ENCODE measurements at regions of chr17 and their contacts with region 1.

Region 1: GRCh38 chr17:50200457-50201275 is 765 bp downstream of the COL1A1 start:
- DNase-seq: peak; percentile 88
- ATAC-seq: peak; percentile 72
- H3K4me3 ChIP-seq: peak overlapping the region; percentile 71 to 75
- H3K27ac ChIP-seq: peak overlapping the region; percentile 45; the same call in 1 of the 2 replicates
- H3K4me1 ChIP-seq: peaks cover 10 to 39% of the 10 kb centered on the region in 2 experiments
- H3K27me3 ChIP-seq: no peaks in the 10 kb centered on the region
- CTCF ChIP-seq: peak; percentile 99 to 100 (median 100)
- POLR2A ChIP-seq: no peak
- RAD21 ChIP-seq: peak; percentile 100

Region 2: GRCh38 chr17:49567871-49568694 is 632.6 kb before region 1 on chr17:
- CTCF ChIA-PET with region 1: no interaction called
- POLR2A ChIA-PET with region 1: no interaction called
- RAD21 ChIA-PET with region 1: no interaction called
- intact Hi-C with region 1: loop called (anchors 5 kb)
- DNase-seq: peak; percentile 81
- ATAC-seq: peak; percentile 74
- H3K4me3 ChIP-seq: 0 out of 4 replicates have a peak overlapping the region, but pooled peaks of 1 of the 2 experiments have one; percentile 2
- H3K27ac ChIP-seq: no peak overlapping the region
- H3K4me1 ChIP-seq: peaks cover 0 to 17% of the 10 kb centered on the region in 2 experiments; a peak in 3 of 4 replicates
- H3K27me3 ChIP-seq: peaks cover 5% of the 10 kb centered on the region; the same call in 1 of the 2 replicates
- CTCF ChIP-seq: peak; percentile 98 to 99 (median 99)
- POLR2A ChIP-seq: no peak
- RAD21 ChIP-seq: peak; percentile 100

Region 3: DNA sequence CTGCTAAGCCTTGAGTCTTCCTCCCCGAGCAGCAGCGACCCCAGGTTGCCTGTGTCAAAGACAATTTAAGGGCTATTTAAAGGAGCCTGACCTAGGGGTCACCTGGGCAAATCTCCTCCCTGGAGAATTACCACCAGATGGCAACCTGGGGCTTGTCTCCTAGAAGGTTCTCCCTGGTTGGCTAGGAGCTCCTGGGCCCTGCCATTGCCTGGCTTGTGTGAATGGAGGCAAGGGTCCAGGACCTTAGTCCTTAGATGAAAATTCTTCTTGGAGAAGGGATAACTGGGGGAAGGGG is 301.5 kb before region 1 on chr17:
- CTCF ChIA-PET with region 1: no interaction called
- POLR2A ChIA-PET with region 1: no interaction called
- RAD21 ChIA-PET with region 1: no interaction called
- intact Hi-C with region 1: no loop called
- DNase-seq: peak; percentile 48
- ATAC-seq: peak; percentile 73
- H3K4me3 ChIP-seq: no peak overlapping the region
- H3K27ac ChIP-seq: no peak overlapping the region
- H3K4me1 ChIP-seq: peaks cover 28 to 40% of the 10 kb centered on the region in 2 experiments
- H3K27me3 ChIP-seq: peaks cover 7% of the 10 kb centered on the region; the same call in 1 of the 2 replicates
- CTCF ChIP-seq: peak; percentile 58 to 71 (median 62)
- POLR2A ChIP-seq: no peak
- RAD21 ChIP-seq: peak; percentile 85

Region 4: DNA sequence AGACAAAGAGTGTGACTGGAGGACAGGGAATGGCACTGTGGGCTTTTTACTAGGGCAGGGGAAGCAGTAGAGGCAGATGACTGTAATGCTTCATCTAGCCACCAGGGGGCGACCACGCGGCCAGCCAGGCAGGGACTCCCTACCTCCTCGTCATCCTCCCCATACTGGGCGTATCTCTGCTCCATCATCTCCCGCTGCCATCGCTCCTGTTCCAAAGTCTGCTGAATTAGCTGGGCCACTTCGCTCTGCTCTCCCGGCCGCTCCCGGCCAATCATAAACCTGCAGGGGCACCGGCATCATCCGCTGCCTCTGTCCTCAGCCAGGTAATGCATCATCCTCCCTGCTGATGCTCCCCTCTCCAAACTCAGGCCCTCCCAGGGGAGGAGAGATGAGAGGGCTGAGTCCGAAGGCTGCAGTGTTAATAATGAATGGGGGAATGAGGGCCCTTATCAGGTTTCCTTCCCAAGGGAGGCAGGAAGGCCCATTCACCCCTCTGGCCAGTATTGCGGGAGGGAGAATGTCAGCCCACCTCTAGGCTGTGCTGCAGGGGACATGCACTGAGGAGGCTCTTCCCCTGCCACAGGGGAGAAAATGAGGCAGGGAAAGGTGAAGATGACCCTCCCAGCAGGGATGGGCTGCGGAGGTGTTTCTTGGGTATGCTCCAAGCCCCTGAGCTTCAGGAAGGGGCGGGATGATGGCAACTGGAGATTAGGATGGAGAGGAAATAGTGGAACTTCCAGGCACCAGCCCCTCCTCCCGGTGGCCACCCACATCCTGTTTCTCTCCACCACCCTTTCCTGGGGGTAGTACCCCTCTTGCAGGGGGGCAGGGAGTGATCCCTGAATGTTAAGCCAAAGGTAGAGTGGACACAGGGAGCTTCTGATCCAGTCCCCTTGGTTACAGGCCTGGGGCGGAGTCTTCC is 60.5 kb before region 1 on chr17:
- CTCF ChIA-PET with region 1: no interaction called
- POLR2A ChIA-PET with region 1: no interaction called
- RAD21 ChIA-PET with region 1: no interaction called
- intact Hi-C with region 1: loop called (anchors 1 kb)
- DNase-seq: peak; percentile 63
- ATAC-seq: peak; percentile 93
- H3K4me3 ChIP-seq: no peak overlapping the region
- H3K27ac ChIP-seq: peak overlapping the region; percentile 13; the same call in 1 of the 2 replicates
- H3K4me1 ChIP-seq: peaks cover 0 to 9% of the 10 kb centered on the region in 2 experiments; a peak in 1 of 4 replicates
- H3K27me3 ChIP-seq: no peaks in the 10 kb centered on the region
- CTCF ChIP-seq: peak; percentile 72 to 97 (median 89)
- POLR2A ChIP-seq: no peak
- RAD21 ChIP-seq: no peak; the same call in none of the 2 replicates

Region 5: DNA sequence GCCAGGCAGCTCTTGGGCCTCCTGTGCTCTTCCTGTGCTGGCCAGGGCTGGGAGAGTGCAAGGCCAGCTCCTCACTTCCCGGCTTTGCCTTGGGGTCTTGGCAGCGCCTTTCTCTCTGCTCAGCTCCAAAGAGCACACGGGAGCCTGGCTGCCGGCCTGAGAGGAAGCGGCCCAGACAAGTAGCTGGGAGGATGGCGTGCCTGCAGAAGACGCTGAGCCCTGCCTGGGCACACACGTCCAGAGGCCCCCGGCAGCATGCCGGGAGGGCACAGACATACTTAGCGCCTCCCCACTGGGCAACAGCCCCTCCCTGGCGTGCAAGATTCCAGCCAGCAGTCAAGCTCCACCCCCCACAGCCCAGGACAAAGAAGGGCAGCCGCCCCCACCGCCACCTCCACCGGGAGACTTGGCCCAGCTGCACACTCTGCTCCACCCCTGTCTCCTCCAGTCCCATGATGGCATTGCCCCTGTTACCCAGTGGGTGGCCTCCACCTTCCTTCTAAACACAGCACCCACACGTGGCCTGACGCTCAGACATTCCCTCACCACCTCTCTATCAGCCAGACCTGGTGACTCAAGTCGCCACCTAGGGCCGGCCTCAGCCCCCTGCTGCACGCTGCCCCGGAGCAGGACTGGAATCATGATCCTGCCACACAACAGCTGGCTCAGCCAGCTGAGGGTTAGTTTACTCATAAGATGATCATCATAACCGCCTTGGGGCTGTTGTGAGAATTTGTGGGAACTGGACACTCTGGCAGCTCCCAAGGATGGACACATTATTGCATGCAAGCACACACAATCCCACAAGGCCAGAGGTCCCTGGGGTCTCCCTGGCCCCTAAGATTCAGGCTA is 22.5 kb before region 1 on chr17:
- CTCF ChIA-PET with region 1: interaction called, 39 read pairs
- POLR2A ChIA-PET with region 1: interaction called, 18 read pairs
- RAD21 ChIA-PET with region 1: interaction called in 1 of 2 experiments, 12 read pairs
- intact Hi-C with region 1: no loop called
- DNase-seq: peak; percentile 90
- ATAC-seq: peak; percentile 94
- H3K4me3 ChIP-seq: peak overlapping the region; percentile 22 to 43
- H3K27ac ChIP-seq: peak overlapping the region; percentile 61
- H3K4me1 ChIP-seq: peaks cover 41 to 56% of the 10 kb centered on the region in 2 experiments
- H3K27me3 ChIP-seq: no peaks in the 10 kb centered on the region
- CTCF ChIP-seq: peak; percentile 80 to 96 (median 82)
- POLR2A ChIP-seq: no peak
- RAD21 ChIP-seq: peak; percentile 72

Region 6: DNA sequence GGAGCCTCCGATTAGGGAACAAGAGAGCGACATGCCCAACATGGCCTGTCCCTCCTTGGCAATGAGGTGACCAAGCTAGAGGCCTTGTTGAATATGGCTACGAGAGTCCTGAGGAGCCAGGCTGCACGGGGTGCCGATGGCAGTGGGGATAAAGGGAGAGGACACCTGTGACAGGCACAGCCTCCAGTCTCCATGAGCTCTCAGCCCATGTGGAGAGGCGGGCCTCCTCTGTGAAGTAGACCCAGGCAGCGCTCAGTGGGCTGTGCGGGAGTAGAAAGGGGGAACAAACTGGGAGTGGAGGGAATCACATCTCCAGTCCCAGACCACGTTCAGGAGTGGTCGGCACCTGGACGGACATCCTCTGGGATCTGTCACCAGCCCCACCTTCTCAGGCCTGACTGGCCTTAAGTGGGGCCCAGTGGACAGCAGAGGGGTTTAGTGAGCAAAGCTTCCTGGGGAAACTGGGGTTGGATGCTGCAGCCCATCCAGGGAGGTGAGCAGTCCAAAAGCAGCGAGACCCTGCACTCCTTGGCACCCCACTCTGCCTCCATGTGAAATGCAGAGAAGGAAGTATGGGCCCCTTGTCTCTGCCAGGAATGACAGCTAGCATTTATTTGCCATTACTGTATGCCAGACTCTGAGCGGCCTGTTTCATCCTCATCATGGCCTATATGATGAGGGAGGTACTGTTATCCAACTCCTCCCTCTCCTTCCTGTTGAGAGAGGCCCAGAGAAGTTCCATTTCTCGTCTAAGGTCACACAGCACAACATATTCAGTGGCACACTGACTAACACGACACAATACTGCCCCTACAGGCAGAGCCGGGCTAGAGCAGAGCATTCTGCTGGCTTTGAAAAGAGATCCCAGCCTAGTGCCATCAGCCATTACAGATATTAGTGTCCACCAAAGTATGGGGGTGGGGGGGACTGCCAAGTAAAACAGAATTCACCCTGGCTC is 69.1 kb after region 1 on chr17:
- CTCF ChIA-PET with region 1: interaction called, 152 read pairs
- POLR2A ChIA-PET with region 1: interaction called, 6 read pairs
- RAD21 ChIA-PET with region 1: interaction called, 8 to 16 read pairs
- intact Hi-C with region 1: loop called (anchors 1 kb)
- DNase-seq: peak; percentile 60
- ATAC-seq: peak; percentile 67
- H3K4me3 ChIP-seq: no peak overlapping the region
- H3K27ac ChIP-seq: no peak overlapping the region
- H3K4me1 ChIP-seq: peaks cover 38 to 46% of the 10 kb centered on the region in 2 experiments
- H3K27me3 ChIP-seq: no peaks in the 10 kb centered on the region
- CTCF ChIP-seq: peak; percentile 92 to 98 (median 98)
- POLR2A ChIP-seq: no peak
- RAD21 ChIP-seq: peak; percentile 84

Region 7: GRCh38 chr17:50289991-50290702 is 89.5 kb after region 1 on chr17:
- CTCF ChIA-PET with region 1: interaction called, 243 read pairs
- POLR2A ChIA-PET with region 1: interaction called, 21 read pairs
- RAD21 ChIA-PET with region 1: interaction called, 4 to 28 read pairs
- intact Hi-C with region 1: no loop called
- DNase-seq: peak; percentile 29
- ATAC-seq: peak; percentile 60
- H3K4me3 ChIP-seq: no peak overlapping the region; a peak in 1 of 4 replicates
- H3K27ac ChIP-seq: no peak overlapping the region
- H3K4me1 ChIP-seq: peaks cover 0 to 13% of the 10 kb centered on the region in 2 experiments; a peak in 2 of 4 replicates
- H3K27me3 ChIP-seq: no peaks in the 10 kb centered on the region
- CTCF ChIP-seq: no peak
- POLR2A ChIP-seq: no peak
- RAD21 ChIP-seq: no peak

Measured in HCT116 (cell line).